MCF 10A (cell line): ENCODE measurements at regions of chr10 and their contacts with region 1.

Region 1: GRCh38 chr10:115801992-115802391 is 471.0 kb downstream of the GFRA1 start:
- DNase-seq: no peak
- H3K4me3 Mint-ChIP-seq: no peak overlapping the region
- H3K27ac Mint-ChIP-seq: no peak overlapping the region
- H3K4me1 Mint-ChIP-seq: no peaks in the 10 kb centered on the region
- H3K27me3 Mint-ChIP-seq: no peaks in the 10 kb centered on the region
- CTCF ChIP-seq: no peak

Region 2: DNA sequence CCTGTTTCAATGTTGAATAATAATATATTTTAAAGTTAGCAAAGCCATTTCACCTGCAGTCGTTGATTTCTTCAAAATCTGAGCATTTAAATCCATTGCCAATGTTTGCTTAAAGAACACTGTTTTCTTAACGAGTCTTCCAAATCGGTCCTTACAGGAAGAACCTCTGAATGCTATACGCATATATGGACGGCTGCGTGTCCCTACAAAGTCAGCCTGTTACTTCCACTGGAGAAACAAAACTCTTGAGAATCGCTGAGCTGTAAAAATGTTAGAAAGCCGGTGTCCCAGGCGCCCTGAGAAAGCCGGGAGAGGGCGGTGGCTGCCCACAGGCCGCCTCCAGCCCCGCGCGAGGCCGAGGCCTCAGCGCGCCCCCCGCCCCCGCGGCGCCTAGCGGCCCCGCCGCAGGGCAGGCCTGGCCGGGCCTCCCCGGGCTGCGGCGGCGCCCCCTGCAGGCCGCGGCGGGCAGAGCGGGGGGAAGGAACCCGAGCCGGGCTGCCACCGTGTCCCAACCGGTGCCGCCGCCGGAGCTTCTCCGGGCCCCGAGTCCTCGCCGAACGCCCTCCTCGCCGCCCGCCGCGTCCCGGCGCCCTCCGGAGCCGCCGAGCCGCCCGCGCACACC is 980.6 kb before region 1 on chr10 and contains the start of gene FHIP2A:
- CTCF ChIA-PET with region 1: no interaction called
- POLR2A ChIA-PET with region 1: no interaction called
- intact Hi-C with region 1: no loop called
- DNase-seq: peak; percentile 71
- H3K4me3 Mint-ChIP-seq: peak within 1 kb of the TSS; percentile 85
- H3K27ac Mint-ChIP-seq: peak within 1 kb of the TSS; percentile 97
- H3K4me1 Mint-ChIP-seq: peaks cover 20% of the 10 kb centered on the region
- H3K27me3 Mint-ChIP-seq: no peaks in the 10 kb centered on the region
- CTCF ChIP-seq: peak; percentile 34
- total RNA-seq, gene FHIP2A: 17.2 and 25.9 TPM in 2 replicates

Region 3: DNA sequence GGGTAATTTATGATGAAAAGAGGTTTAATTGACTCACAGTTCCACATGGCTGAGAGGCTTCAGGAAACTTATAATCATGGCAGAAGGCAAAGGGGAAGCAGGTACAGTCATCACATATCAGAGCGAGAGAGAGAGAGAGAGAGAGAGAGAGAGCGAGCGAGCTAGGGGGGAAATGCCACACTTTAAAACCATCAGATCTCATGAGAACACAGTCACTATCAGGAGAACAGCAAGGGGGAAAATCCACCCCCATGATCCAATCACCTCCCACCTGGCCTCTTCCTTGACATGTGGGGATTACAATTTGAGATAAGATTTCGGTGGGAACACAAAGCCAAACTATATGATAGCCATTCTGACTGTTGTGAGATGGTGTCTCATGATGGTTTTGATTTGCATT is 105.2 kb before region 1 on chr10:
- CTCF ChIA-PET with region 1: no interaction called
- POLR2A ChIA-PET with region 1: no interaction called
- intact Hi-C with region 1: no loop called
- DNase-seq: no peak
- H3K4me3 Mint-ChIP-seq: no peak overlapping the region
- H3K27ac Mint-ChIP-seq: no peak overlapping the region
- H3K4me1 Mint-ChIP-seq: no peaks in the 10 kb centered on the region
- H3K27me3 Mint-ChIP-seq: no peaks in the 10 kb centered on the region
- CTCF ChIP-seq: no peak

Region 4: GRCh38 chr10:115745943-115746342 is 56.0 kb before region 1 on chr10:
- CTCF ChIA-PET with region 1: no interaction called
- POLR2A ChIA-PET with region 1: no interaction called
- intact Hi-C with region 1: no loop called
- DNase-seq: no peak
- H3K4me3 Mint-ChIP-seq: no peak overlapping the region
- H3K27ac Mint-ChIP-seq: no peak overlapping the region
- H3K4me1 Mint-ChIP-seq: no peaks in the 10 kb centered on the region
- H3K27me3 Mint-ChIP-seq: no peaks in the 10 kb centered on the region
- CTCF ChIP-seq: no peak

Region 5: GRCh38 chr10:115772606-115773005 is 29.4 kb before region 1 on chr10:
- CTCF ChIA-PET with region 1: interaction called, 21 read pairs
- POLR2A ChIA-PET with region 1: no interaction called
- intact Hi-C with region 1: no loop called
- DNase-seq: peak; percentile 56
- H3K4me3 Mint-ChIP-seq: peak overlapping the region; percentile 15
- H3K27ac Mint-ChIP-seq: peak overlapping the region; percentile 21
- H3K4me1 Mint-ChIP-seq: peaks cover 21% of the 10 kb centered on the region
- H3K27me3 Mint-ChIP-seq: no peaks in the 10 kb centered on the region
- CTCF ChIP-seq: no peak

Region 6: DNA sequence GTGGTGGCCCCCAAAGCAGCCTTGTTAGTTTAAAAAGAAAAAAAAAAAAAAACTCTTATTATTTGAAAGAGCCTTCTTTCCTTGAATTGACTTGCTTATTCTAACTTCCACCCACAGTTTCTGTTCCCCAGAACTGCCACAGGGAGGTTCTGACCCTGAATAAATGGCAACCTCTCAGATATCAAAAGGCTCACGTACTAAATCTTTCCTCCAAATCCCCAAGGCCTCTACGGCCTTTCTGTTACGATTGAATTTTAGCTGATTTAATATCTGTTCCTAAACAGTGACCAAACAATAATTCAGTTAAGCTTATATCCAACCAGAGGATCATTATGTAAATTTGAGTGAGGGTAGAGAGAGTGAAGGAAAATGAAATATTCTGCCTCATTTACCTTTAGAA is 11.8 kb before region 1 on chr10:
- CTCF ChIA-PET with region 1: interaction called, 11 read pairs
- POLR2A ChIA-PET with region 1: interaction called, 4 read pairs
- intact Hi-C with region 1: no loop called
- DNase-seq: no peak
- H3K4me3 Mint-ChIP-seq: no peak overlapping the region
- H3K27ac Mint-ChIP-seq: no peak overlapping the region
- H3K4me1 Mint-ChIP-seq: no peaks in the 10 kb centered on the region
- H3K27me3 Mint-ChIP-seq: no peaks in the 10 kb centered on the region
- CTCF ChIP-seq: no peak

Region 7: GRCh38 chr10:115829521-115830205 is 27.7 kb after region 1 on chr10:
- CTCF ChIA-PET with region 1: interaction called, 11 read pairs
- POLR2A ChIA-PET with region 1: no interaction called
- intact Hi-C with region 1: no loop called
- DNase-seq: peak; percentile 57
- H3K4me3 Mint-ChIP-seq: no peak overlapping the region
- H3K27ac Mint-ChIP-seq: no peak overlapping the region
- H3K4me1 Mint-ChIP-seq: no peaks in the 10 kb centered on the region
- H3K27me3 Mint-ChIP-seq: no peaks in the 10 kb centered on the region
- CTCF ChIP-seq: no peak

Region 8: GRCh38 chr10:116281775-116282174 is 479.8 kb after region 1 on chr10:
- CTCF ChIA-PET with region 1: interaction called, 59 read pairs
- POLR2A ChIA-PET with region 1: no interaction called
- intact Hi-C with region 1: no loop called
- DNase-seq: no peak
- H3K4me3 Mint-ChIP-seq: no peak overlapping the region
- H3K27ac Mint-ChIP-seq: no peak overlapping the region
- H3K4me1 Mint-ChIP-seq: no peaks in the 10 kb centered on the region
- H3K27me3 Mint-ChIP-seq: peaks cover 14% of the 10 kb centered on the region
- CTCF ChIP-seq: no peak

Region 9: GRCh38 chr10:116385994-116386809 is 584.2 kb after region 1 on chr10:
- CTCF ChIA-PET with region 1: interaction called, 50 read pairs
- POLR2A ChIA-PET with region 1: no interaction called
- intact Hi-C with region 1: loop called (anchors 2 kb)
- DNase-seq: peak; percentile 45
- H3K4me3 Mint-ChIP-seq: no peak overlapping the region
- H3K27ac Mint-ChIP-seq: no peak overlapping the region
- H3K4me1 Mint-ChIP-seq: no peaks in the 10 kb centered on the region
- H3K27me3 Mint-ChIP-seq: no peaks in the 10 kb centered on the region
- CTCF ChIP-seq: peak; percentile 59